Activated naive CD4-positive, alpha-beta T cell treated with anti-CD3 and anti-CD28 coated beads for 36 hours (primary cell): ENCODE measurements at regions of chr4 and their contacts with region 1.

Region 1: DNA sequence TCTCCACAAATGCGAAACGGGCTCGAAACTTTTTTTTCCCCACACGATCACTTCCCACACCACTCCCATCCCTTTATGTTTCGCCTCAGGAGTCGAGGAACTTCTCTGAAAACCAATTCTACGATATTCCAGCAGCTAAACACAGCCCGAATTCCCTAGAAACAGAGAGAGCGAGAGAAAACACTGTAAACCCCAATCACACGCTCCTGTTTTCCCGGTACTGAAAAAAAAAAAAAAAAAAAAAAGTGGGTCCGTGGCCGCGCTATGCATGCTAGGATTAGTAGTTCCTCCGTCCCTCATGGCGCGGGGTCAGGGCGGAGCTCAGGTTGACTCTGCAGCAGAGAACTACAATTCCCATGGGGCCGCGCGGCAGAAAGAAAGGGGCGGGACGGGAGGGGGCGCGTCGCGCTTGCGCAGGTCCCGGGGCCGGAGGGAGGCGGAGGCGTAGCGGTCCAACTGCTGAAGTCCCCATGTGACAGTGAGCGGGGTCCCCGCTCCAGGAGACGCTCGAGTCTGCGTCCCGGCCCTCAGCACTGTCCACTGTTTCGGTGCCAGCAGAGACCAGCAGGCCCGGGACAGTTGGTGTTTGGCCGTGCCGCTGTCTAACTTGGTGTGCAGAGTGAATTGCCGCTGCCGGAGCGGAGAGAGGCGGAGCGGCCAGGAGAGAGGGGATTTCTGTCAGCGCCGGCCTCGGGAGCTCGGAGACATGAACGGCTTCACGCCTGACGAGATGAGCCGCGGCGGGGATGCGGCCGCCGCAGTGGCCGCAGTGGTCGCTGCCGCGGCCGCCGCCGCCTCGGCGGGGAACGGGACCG is at the start of gene SAP30:
- DNase-seq: peak; percentile 98
- H3K4me3 Mint-ChIP-seq: peak within 1 kb of the TSS; percentile 99
- H3K27ac Mint-ChIP-seq: peak within 1 kb of the TSS; percentile 99
- H3K4me1 Mint-ChIP-seq: peaks cover 18% of the 10 kb centered on the region
- H3K27me3 Mint-ChIP-seq: peaks cover 20% of the 10 kb centered on the region
- total RNA-seq, gene SAP30: 9.2 to 9.7 TPM

Region 2: DNA sequence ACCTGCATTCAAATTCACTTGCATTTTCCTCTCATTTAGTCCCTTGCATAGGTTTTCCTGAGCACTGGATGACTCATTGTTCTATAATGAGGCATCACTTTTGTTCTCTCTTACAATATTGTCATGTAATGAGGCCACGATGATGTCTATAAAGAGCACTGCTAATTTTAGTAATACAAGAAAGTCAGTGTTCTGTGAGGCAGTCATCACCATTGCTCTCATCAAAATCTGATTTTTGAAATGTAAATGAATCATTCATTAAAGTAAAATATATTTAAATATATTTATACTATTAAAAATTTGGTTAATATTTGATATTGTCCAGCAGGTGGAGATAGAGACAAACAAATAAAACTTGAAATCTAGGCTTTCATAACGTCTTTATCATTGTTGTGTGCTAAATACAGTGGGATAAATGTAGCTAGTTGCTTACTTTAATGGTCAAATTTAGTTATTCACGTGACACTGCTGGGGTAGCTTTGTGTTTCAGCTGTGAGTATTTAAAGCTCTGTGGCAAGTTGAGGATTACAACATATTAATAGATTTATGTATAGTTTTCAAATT is 52.0 kb before region 1 on chr4:
- CTCF ChIA-PET with region 1: interaction called, 6 read pairs
- intact Hi-C with region 1: loop called (anchors 1 kb)
- DNase-seq: no peak
- H3K4me3 Mint-ChIP-seq: no peak overlapping the region
- H3K27ac Mint-ChIP-seq: no peak overlapping the region
- H3K4me1 Mint-ChIP-seq: peaks cover 11% of the 10 kb centered on the region
- H3K27me3 Mint-ChIP-seq: no peaks in the 10 kb centered on the region